Mammary epithelial cell (primary cell): ENCODE measurements at regions of chr10 and their contacts with region 1.

Region 1: GRCh38 chr10:70940834-70941568 is 52.6 kb upstream of the PCBD1 start:
- DNase-seq: peak; percentile 38
- H3K4me3 ChIP-seq: no peak overlapping the region
- H3K27ac ChIP-seq: no peak overlapping the region
- H3K4me1 ChIP-seq: no peaks in the 10 kb centered on the region
- H3K27me3 ChIP-seq: no peaks in the 10 kb centered on the region
- CTCF ChIP-seq: no peak

Region 2: GRCh38 chr10:71001470-71001869 is 60.5 kb after region 1 on chr10:
- CTCF ChIA-PET with region 1: no interaction called
- dilution Hi-C with region 1: loop called (anchors 5 kb)
- in situ Hi-C with region 1: no loop called
- intact Hi-C with region 1: no loop called
- DNase-seq: peak; percentile 9
- H3K4me3 ChIP-seq: no peak overlapping the region
- H3K27ac ChIP-seq: no peak overlapping the region
- H3K4me1 ChIP-seq: peaks cover 12% of the 10 kb centered on the region
- H3K27me3 ChIP-seq: no peaks in the 10 kb centered on the region
- CTCF ChIP-seq: no peak